A549 (cell line): ENCODE measurements at regions of chr2 and their contacts with region 1.

Region 1: GRCh38 chr2:41709702-41710599 is 337.9 kb upstream of the PKDCC start:
- DNase-seq: no peak
- ATAC-seq: no peak
- H3K4me3 ChIP-seq: no peak overlapping the region
- H3K27ac ChIP-seq: no peak overlapping the region
- H3K4me1 ChIP-seq: no peaks in the 10 kb centered on the region
- CTCF ChIP-seq: no peak
- EP300 ChIP-seq: no peak
- POLR2A ChIP-seq: no peak
- RAD21 ChIP-seq: no peak

Region 2: GRCh38 chr2:41621563-41621962 is 88.4 kb before region 1 on chr2:
- CTCF ChIA-PET with region 1: no interaction called
- POLR2A ChIA-PET with region 1: no interaction called
- DNase-seq: no peak
- ATAC-seq: no peak
- H3K4me3 ChIP-seq: no peak overlapping the region
- H3K27ac ChIP-seq: no peak overlapping the region
- H3K4me1 ChIP-seq: no peaks in the 10 kb centered on the region
- CTCF ChIP-seq: no peak
- EP300 ChIP-seq: no peak
- POLR2A ChIP-seq: no peak
- RAD21 ChIP-seq: no peak

Region 3: DNA sequence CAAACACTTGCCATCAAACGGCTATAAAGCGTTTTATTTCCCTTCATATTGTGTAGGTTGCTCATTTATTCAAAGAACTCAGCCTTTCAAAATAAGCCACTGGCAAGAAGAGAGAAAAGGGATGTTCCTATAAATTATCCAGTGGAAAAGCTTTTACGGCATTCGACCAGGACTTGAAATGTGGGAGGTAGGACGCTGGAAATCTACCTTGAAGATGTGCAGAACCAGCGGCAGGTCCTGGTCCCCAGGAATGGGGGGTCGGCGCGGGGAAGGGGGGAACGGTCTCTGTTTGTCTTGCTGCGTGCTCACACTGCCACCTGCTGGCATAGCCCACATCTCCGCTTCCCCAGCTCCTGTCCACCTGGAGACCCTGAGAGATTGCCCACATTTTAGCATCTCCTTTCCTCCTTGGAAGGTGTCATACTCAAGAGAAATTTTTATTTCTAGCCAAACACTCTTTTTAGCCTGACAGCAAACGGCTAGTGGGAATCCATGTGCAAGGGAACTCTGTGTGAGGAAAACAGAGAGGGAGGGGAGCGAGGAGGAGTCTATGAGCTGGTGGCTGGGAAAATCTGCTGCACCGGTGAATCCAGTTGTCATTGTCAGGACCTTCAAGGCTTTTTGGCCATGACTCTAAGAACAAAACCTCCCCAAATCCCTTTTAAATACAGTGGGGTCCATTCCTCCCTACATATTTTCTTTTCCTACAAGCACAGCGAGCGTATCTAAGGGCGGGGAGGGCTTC is 11.1 kb before region 1 on chr2:
- CTCF ChIA-PET with region 1: interaction called, 22 read pairs
- POLR2A ChIA-PET with region 1: no interaction called
- DNase-seq: peak in 1 of 2 experiments; percentile 33
- ATAC-seq: peak; percentile 66 to 89; a peak in 5 of 6 replicates
- H3K4me3 ChIP-seq: no peak overlapping the region
- H3K27ac ChIP-seq: no peak overlapping the region
- H3K4me1 ChIP-seq: no peaks in the 10 kb centered on the region
- CTCF ChIP-seq: peak; percentile 84
- EP300 ChIP-seq: no peak
- POLR2A ChIP-seq: no peak
- RAD21 ChIP-seq: peak; percentile 77 to 83